ENCODE measurements at regions of chr10 and their contacts with region 1.

Region 1: DNA sequence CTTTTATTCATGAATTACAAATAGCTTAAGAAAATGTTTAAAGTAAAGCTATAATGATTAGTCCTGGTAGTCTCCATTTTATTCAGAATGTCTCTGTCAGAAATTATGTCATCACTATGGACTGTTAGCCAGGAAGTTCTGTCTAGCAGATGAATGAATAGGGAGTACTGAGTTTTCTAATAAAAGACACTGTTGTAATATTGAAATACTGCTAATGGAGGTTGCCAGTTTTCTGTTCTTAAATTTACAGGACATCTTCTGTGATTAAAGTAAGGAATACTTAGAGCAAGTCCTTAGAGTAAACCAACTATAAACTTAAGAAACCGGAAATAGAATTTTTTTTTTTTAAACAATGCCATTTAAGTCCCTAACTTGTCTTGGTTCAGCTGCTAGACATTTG is 309.8 kb downstream of the ADK start:
- DNase-seq: no peak
- ATAC-seq: no peak
- H3K4me3 ChIP-seq: no peak overlapping the region
- H3K4me3 Mint-ChIP-seq: no peak overlapping the region
- H3K27ac ChIP-seq: no peak overlapping the region
- H3K27ac Mint-ChIP-seq: peak overlapping the region; percentile 0
- H3K4me1 ChIP-seq: no peaks in the 10 kb centered on the region
- H3K4me1 Mint-ChIP-seq: peaks cover 2% of the 10 kb centered on the region
- H3K27me3 ChIP-seq: no peaks in the 10 kb centered on the region
- H3K27me3 Mint-ChIP-seq: no peaks in the 10 kb centered on the region
- CTCF ChIP-seq: no peak

Region 2: GRCh38 chr10:73786512-73786885 is 674.3 kb before region 1 on chr10:
- CTCF ChIA-PET with region 1: no interaction called
- POLR2A ChIA-PET with region 1: no interaction called
- intact Hi-C with region 1: no loop called
- DNase-seq: no peak
- ATAC-seq: no peak
- H3K4me3 ChIP-seq: peak overlapping the region; percentile 68 to 81
- H3K4me3 Mint-ChIP-seq: peak overlapping the region; percentile 99
- H3K27ac ChIP-seq: peak overlapping the region; percentile 62 to 82
- H3K27ac Mint-ChIP-seq: peak overlapping the region; percentile 89
- H3K4me1 ChIP-seq: peaks cover 32% of the 10 kb centered on the region
- H3K4me1 Mint-ChIP-seq: peaks cover 41% of the 10 kb centered on the region
- H3K27me3 ChIP-seq: no peaks in the 10 kb centered on the region
- H3K27me3 Mint-ChIP-seq: no peaks in the 10 kb centered on the region
- CTCF ChIP-seq: no peak

Region 3: DNA sequence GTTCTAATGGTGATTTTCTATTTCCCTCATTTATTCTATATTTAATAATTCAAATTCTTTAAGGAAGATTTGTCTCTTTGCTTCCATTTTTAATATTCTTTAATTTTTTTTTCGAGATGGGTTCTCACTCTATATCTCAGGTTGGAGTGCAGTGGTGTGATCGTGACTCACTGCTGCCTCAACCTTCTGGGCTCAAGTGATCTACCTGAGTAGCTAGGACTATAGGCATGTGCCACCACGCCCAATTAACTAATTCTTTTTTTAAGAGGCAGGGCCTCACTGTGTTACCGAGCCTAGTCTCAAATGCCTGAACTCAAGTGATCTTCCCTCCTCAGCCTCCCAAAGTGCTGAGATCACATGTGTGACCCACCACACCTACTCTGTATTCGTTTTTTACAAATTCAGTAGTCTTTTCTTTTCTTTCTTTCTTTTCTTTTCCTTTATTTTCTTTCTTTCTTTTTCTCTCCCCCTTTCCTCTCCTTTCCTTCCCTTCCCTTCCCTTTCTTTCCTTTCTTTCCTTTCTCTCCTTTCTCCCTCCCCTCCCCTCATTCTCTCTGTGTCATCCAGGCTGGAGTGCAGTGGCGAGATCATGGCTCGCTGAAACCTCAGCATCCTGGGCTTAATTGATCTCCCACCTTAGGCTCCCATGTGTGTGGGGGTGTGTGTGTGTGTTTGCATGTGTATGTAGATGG is 13.4 kb after region 1 on chr10:
- CTCF ChIA-PET with region 1: interaction called, 4 read pairs
- POLR2A ChIA-PET with region 1: no interaction called
- intact Hi-C with region 1: loop called in 1 of 2 experiments (anchors 1 kb)
- DNase-seq: no peak
- ATAC-seq: no peak
- H3K4me3 ChIP-seq: no peak overlapping the region
- H3K4me3 Mint-ChIP-seq: no peak overlapping the region
- H3K27ac ChIP-seq: no peak overlapping the region
- H3K27ac Mint-ChIP-seq: no peak overlapping the region
- H3K4me1 ChIP-seq: no peaks in the 10 kb centered on the region
- H3K4me1 Mint-ChIP-seq: no peaks in the 10 kb centered on the region
- H3K27me3 ChIP-seq: no peaks in the 10 kb centered on the region
- H3K27me3 Mint-ChIP-seq: no peaks in the 10 kb centered on the region
- CTCF ChIP-seq: no peak

Region 4: GRCh38 chr10:75399461-75400162 is 938.8 kb after region 1 on chr10:
- CTCF ChIA-PET with region 1: no interaction called
- POLR2A ChIA-PET with region 1: no interaction called
- intact Hi-C with region 1: no loop called
- DNase-seq: peak in 6 of 9 experiments; percentile 20 to 55 (median 38)
- ATAC-seq: peak; percentile 41
- H3K4me3 ChIP-seq: peak overlapping the region in 1 of 2 experiments; percentile 45
- H3K4me3 Mint-ChIP-seq: peak overlapping the region; percentile 77
- H3K27ac ChIP-seq: no peak overlapping the region
- H3K27ac Mint-ChIP-seq: no peak overlapping the region
- H3K4me1 ChIP-seq: peaks cover 21% of the 10 kb centered on the region
- H3K4me1 Mint-ChIP-seq: peaks cover 28% of the 10 kb centered on the region
- H3K27me3 ChIP-seq: peaks cover 22 to 34% of the 10 kb centered on the region in 2 experiments
- H3K27me3 Mint-ChIP-seq: peaks cover 42% of the 10 kb centered on the region
- CTCF ChIP-seq: no peak